ENCODE measurements at regions of chr12 and their contacts with region 1.

Region 1: DNA sequence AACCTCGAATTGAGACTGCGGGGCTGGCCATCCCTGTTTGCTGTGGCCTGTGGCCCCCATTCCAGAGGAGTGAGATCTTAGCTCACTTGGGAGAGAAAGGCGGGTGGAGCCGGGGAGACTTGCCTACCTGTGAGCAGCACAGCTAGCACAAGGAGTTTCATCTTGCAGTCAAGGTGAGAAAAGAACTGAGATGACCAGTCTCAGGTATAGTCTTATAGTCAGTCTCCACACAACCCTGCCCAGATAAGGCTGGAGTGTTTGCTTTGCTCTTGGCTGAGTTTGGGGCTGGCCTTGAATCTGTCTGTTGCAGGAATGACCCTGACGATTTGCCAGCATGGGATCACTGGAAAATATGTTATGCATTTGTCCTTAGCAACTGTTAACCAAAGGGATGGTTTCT is at the start of gene PLA2G1B:
- DNase-seq: no peak
- H3K4me3 ChIP-seq: no peak within 1 kb of the TSS
- H3K27ac ChIP-seq: no peak within 1 kb of the TSS
- H3K4me1 ChIP-seq: no peaks in the 10 kb centered on the region
- H3K27me3 ChIP-seq: no peaks in the 10 kb centered on the region; the same call in 1 of the 2 replicates
- CTCF ChIP-seq: no peak
- EP300 ChIP-seq: no peak
- RAD21 ChIP-seq: no peak
- polyA plus RNA-seq, gene PLA2G1B: not detected in 2 replicates

Region 2: DNA sequence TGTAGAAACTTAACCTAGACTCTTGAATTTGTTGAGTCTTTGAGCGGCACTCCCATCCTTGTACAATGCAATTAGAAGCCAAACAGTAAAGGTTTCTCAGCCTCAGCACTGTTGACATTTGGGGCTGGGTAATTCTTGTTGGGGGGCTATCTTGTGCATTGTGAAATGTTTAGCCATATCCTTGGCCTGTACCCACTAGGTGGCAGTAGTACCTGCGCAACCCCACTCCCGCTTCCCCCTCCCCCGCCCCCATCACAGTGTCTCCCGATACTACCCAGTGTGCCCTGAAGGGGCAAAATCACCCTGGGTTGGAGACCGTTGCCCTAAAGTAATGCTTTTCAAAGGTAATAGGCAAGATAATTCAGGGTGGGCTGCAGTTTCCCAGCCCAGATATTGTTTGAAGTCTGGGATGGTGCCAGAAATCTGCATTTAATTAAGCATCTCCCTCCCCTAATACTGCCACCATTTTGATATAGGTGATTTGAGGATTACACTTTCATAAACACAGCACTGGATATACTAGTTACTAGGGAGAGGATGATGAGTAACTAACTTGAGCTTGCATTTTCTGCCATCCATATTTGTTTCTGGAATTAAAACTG is 112.2 kb after region 1 on chr12:
- CTCF ChIA-PET with region 1: interaction called, 10 read pairs
- POLR2A ChIA-PET with region 1: interaction called, 4 read pairs
- DNase-seq: peak; percentile 89
- H3K4me3 ChIP-seq: peak overlapping the region in 1 of 2 experiments; percentile 29; a peak in 1 of 4 replicates
- H3K27ac ChIP-seq: peak overlapping the region in 1 of 2 experiments; percentile 24; a peak in 1 of 4 replicates
- H3K4me1 ChIP-seq: peaks cover 0 to 11% of the 10 kb centered on the region in 2 experiments; a peak in 2 of 4 replicates
- H3K27me3 ChIP-seq: no peaks in the 10 kb centered on the region
- CTCF ChIP-seq: peak; percentile 73
- EP300 ChIP-seq: no peak
- RAD21 ChIP-seq: peak; percentile 57

Region 3: GRCh38 chr12:120489018-120489417 is 161.4 kb after region 1 on chr12:
- CTCF ChIA-PET with region 1: no interaction called
- POLR2A ChIA-PET with region 1: no interaction called
- DNase-seq: no peak
- H3K4me3 ChIP-seq: no peak overlapping the region
- H3K27ac ChIP-seq: no peak overlapping the region
- H3K4me1 ChIP-seq: peaks cover 0 to 6% of the 10 kb centered on the region in 2 experiments; a peak in 1 of 4 replicates
- H3K27me3 ChIP-seq: no peaks in the 10 kb centered on the region
- CTCF ChIP-seq: no peak
- EP300 ChIP-seq: no peak
- RAD21 ChIP-seq: no peak

Region 4: GRCh38 chr12:120514002-120514401 is 186.4 kb after region 1 on chr12:
- CTCF ChIA-PET with region 1: no interaction called
- POLR2A ChIA-PET with region 1: no interaction called
- DNase-seq: no peak
- H3K4me3 ChIP-seq: no peak overlapping the region
- H3K27ac ChIP-seq: no peak overlapping the region
- H3K4me1 ChIP-seq: no peaks in the 10 kb centered on the region
- H3K27me3 ChIP-seq: no peaks in the 10 kb centered on the region
- CTCF ChIP-seq: no peak
- EP300 ChIP-seq: no peak
- RAD21 ChIP-seq: no peak

Measured in SK-N-SH (cell line).